Activated naive CD4-positive, alpha-beta T cell treated with anti-CD3 and anti-CD28 coated beads for 36 hours (primary cell): ENCODE measurements at regions of chr6 and their contacts with region 1.

Region 1: GRCh38 chr6:117568831-117569410 is 33.4 kb downstream of the GOPC start:
- DNase-seq: no peak
- H3K4me3 Mint-ChIP-seq: no peak overlapping the region
- H3K27ac Mint-ChIP-seq: no peak overlapping the region
- H3K4me1 Mint-ChIP-seq: peaks cover 19% of the 10 kb centered on the region
- H3K27me3 Mint-ChIP-seq: no peaks in the 10 kb centered on the region

Region 2: DNA sequence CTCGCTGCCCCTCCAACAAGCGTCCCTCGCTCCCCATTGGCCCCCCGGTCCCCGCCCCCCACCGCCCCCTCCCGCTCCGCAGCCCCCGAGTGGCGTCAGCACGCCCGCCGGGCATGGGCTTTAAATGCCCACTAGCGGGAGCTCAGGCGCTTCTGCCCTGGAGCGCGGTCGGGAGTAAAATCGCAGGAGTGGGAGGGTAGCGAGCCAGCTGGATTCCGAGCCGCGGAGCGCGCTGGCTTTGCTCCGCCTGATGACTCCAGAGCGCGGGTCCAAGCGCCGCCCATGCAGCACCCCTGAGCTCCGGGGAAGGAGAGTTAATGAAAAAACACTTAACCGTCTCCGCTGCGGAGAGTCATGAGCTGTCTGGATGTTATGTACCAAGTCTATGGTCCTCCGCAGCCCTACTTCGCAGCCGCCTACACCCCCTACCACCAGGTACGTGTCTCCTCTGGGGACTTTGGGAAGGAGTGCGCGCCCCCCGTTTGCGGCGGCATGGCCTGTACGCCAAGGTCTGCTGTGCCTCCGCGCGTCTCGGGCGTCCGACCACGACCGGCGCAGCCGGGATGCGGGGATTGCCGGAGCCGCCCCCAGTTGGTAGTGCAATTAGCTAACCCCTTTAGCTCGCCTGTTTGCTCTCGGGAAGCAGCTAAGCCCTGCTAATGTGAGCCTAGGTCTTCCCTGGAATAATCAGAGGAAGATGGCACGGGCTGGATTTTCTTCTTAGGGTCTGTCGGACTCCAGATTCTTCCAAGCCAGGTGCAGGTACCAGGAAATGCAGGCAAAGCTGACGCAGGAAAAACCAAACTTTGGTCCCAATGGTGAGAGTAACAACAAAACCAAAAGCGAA is 303.3 kb before region 1 on chr6 and contains the start of gene VGLL2:
- CTCF ChIA-PET with region 1: no interaction called
- intact Hi-C with region 1: loop called (anchors 5 kb)
- DNase-seq: no peak
- H3K4me3 Mint-ChIP-seq: peak within 1 kb of the TSS; percentile 51
- H3K27ac Mint-ChIP-seq: no peak within 1 kb of the TSS
- H3K4me1 Mint-ChIP-seq: peaks cover 8% of the 10 kb centered on the region
- H3K27me3 Mint-ChIP-seq: peaks cover 85% of the 10 kb centered on the region
- total RNA-seq, gene VGLL2: not detected

Region 3: DNA sequence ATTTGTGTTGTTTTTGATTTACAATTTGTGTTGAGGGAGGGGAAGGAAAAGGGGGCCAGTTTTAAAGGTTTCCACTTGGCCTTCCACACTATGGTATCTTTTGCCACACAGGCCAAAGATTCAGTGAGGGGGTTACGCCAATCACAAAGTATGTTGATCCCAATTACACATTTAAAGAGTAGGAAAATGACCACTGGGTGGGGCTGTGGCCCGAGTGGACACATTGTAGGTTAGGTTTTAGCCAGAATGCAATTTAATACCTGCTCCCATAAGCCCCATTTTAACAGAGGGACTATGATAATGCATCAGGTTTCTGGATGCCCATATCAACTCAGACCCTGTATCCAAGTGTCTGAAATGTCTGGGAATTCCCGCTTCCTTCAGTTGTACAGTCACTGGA is 288.0 kb before region 1 on chr6:
- CTCF ChIA-PET with region 1: no interaction called
- intact Hi-C with region 1: no loop called
- DNase-seq: no peak
- H3K4me3 Mint-ChIP-seq: no peak overlapping the region
- H3K27ac Mint-ChIP-seq: no peak overlapping the region
- H3K4me1 Mint-ChIP-seq: no peaks in the 10 kb centered on the region
- H3K27me3 Mint-ChIP-seq: peaks cover 6% of the 10 kb centered on the region

Region 4: DNA sequence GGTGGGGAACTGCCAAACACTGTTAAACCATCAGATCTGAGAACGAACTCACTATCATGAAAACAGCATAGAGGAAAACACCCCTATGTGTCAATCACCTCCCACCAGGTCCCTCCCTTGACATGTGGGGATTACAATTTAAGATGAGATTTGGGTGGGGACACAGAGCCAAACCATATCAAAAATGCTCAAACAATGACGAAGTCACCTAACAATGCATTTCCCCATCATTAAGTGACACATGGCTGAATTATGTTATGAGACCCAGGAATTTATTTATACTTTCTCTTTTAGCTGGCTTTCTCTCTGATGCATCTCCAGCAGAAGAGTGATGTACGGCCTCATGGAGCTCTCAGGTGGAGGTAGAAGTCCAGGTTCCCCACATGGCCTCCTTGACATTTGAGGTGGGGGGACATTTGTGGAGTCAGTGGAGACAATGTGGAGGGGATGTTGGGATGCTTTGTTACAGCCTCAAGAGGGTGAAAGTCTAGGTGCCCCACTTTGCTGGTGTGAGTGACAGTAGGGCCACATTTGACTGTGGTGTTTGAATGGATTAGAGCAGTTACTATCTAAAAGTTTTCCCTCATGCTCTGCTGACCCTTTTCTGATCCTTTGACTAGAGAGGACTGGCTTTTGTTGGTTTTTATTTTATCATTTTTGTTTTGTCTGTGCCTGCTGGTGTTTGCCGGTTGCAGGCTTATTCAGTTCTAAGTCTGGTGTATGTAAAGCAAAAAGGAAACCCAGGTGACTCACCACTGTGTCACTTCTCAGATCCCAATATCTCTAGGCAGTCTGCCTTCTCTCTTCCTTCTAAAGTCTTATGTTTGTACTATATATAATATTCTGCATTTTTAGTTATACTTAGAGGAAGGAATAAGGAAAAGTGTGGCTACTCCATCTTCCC is 104.9 kb before region 1 on chr6:
- CTCF ChIA-PET with region 1: no interaction called
- intact Hi-C with region 1: loop called (anchors 1 kb)
- DNase-seq: peak; percentile 55
- H3K4me3 Mint-ChIP-seq: no peak overlapping the region
- H3K27ac Mint-ChIP-seq: peak overlapping the region; percentile 54
- H3K4me1 Mint-ChIP-seq: peaks cover 13% of the 10 kb centered on the region
- H3K27me3 Mint-ChIP-seq: peaks cover 20% of the 10 kb centered on the region

Region 5: DNA sequence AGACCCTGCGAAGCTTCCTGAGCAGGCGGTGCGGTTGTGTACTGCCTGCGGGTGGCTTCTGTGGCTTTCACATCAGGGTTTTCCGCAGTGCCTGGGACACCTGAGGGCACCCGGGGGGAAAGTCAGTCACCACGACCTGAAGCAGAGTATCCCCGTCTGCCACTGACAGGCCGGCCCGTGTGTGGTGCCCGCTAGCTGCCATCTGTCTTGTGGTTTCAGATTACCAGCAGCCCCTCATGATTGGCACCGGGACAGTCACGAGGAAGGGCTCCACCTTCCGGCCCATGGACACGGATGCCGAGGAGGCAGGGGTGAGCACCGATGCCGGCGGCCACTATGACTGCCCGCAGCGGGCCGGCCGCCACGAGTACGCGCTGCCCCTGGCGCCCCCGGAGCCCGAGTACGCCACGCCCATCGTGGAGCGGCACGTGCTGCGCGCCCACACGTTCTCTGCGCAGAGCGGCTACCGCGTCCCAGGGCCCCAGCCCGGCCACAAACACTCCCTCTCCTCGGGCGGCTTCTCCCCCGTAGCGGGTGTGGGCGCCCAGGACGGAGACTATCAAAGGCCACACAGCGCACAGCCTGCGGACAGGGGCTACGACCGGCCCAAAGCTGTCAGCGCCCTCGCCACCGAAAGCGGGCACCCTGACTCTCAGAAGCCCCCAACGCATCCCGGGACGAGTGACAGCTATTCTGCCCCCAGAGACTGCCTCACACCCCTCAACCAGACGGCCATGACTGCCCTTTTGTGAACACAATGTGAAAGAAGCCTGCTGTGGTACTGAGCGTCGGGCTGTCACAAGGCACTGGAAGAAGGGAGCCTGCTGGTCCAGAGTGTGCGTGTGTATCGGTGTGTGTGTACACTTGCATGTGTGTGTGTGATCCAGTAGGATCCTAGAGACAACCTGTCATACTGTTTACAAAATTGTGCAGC is 21.0 kb before region 1 on chr6:
- CTCF ChIA-PET with region 1: interaction called, 4 read pairs
- intact Hi-C with region 1: loop called (anchors 1 kb)
- DNase-seq: peak; percentile 52
- H3K4me3 Mint-ChIP-seq: peak overlapping the region; percentile 67
- H3K27ac Mint-ChIP-seq: no peak overlapping the region
- H3K4me1 Mint-ChIP-seq: peaks cover 37% of the 10 kb centered on the region
- H3K27me3 Mint-ChIP-seq: peaks cover 6% of the 10 kb centered on the region

Region 6: GRCh38 chr6:117555882-117556498 is 12.9 kb before region 1 on chr6:
- CTCF ChIA-PET with region 1: interaction called, 13 read pairs
- intact Hi-C with region 1: no loop called
- DNase-seq: peak; percentile 78
- H3K4me3 Mint-ChIP-seq: no peak overlapping the region
- H3K27ac Mint-ChIP-seq: no peak overlapping the region
- H3K4me1 Mint-ChIP-seq: peaks cover under 1% of the 10 kb centered on the region
- H3K27me3 Mint-ChIP-seq: peaks cover 2% of the 10 kb centered on the region